H1 (cell line): ENCODE measurements at regions of chr20 and their contacts with region 1.

Region 1: DNA sequence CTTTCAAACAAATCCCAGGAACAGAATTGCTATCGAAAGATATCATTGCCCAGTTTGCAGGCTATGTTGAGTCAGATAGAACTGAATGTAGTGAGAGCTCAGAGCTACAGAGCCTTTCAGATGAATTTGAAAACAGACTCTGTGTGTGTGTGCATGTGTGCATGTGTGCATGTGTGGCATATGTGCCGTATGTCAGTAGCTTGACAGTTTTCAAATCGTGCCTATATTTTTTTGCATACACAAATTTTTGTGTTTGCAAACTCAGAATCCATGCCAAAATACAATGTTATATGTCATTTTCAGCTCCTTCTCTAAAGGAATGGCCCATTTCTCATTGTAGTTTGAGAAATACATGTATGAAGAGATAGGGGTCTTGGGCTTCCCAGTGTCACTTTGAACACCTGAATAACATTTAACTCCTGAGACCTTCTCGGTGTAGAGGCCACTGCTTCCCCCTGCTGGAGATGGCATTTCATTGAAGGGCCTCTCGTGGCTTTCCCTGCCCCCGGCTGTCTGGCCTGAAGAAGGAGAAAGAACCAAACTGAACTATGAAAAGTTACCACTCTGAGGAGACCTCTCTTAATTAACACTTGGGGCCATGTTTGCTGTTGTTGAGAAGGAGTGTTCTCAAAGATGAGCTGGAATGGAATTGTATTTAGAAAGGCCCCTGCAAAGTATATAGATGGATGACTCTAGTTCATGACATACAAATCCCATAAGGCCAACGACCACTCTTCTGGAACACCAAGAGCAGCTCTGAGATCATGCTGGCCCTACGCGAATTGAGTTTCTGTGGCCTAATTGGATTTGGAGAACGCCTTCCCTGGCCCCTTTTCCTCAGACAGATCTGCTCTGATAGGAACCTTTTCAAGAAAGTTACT is 58.7 kb downstream of the VAPB start:
- DNase-seq: peak in 1 of 2 experiments; percentile 76
- H3K4me3 ChIP-seq: no peak overlapping the region
- H3K27ac ChIP-seq: no peak overlapping the region
- H3K4me1 ChIP-seq: peaks cover 4 to 7% (median 5%) of the 10 kb centered on the region in 4 experiments; a peak in 6 of 7 replicates
- H3K27me3 ChIP-seq: no peaks in the 10 kb centered on the region
- CTCF ChIP-seq: peak; percentile 69 to 85 (median 84)
- EP300 ChIP-seq: no peak
- POLR2A ChIP-seq: no peak
- RAD21 ChIP-seq: peak; percentile 88 to 91

Region 2: DNA sequence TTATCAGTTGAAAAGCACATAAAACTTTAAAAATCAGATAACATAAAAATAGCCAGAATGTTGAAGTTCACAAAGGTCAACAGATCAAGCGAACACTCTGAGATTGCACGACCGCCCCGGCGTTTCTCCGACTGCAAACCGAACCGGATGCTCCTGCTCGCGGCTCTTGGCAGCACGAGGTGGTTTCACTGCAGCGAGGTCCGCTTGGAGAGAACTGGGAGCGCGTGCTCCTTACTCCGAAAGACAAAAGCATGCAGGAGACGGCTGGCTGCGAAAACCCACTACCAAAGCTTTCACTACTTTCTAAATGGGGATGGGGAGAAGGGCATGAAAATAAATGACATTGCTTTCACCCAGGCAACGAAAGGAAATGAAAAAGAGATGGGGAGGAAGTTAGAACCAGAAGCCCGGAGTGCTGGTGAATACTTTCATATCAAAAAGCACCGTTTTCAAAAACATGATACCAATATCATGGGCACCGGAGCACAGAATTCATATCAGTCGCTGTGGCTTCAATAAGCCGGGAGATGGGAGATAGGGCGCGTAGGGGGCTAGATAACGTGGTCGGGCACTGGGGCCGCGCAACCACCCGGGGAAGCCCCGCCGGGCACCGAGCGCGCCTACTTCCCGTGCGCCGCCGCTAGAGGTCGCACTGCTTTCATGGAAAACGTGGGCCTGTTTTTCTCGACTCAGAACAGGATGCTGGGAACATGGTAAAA is 211.0 kb before region 1 on chr20:
- CTCF ChIA-PET with region 1: interaction called, 17 read pairs
- POLR2A ChIA-PET with region 1: interaction called, 4 read pairs
- DNase-seq: peak; percentile 34 to 97
- H3K4me3 ChIP-seq: peak overlapping the region; percentile 29 to 60 (median 44); a peak in 7 of 8 replicates
- H3K27ac ChIP-seq: no peak overlapping the region
- H3K4me1 ChIP-seq: no peaks in the 10 kb centered on the region; a peak in 1 of 7 replicates
- H3K27me3 ChIP-seq: no peaks in the 10 kb centered on the region; a peak in 1 of 7 replicates
- CTCF ChIP-seq: peak; percentile 88 to 97 (median 90)
- EP300 ChIP-seq: no peak
- POLR2A ChIP-seq: no peak; a peak in 1 of 3 replicates
- RAD21 ChIP-seq: peak; percentile 88 to 90

Region 3: DNA sequence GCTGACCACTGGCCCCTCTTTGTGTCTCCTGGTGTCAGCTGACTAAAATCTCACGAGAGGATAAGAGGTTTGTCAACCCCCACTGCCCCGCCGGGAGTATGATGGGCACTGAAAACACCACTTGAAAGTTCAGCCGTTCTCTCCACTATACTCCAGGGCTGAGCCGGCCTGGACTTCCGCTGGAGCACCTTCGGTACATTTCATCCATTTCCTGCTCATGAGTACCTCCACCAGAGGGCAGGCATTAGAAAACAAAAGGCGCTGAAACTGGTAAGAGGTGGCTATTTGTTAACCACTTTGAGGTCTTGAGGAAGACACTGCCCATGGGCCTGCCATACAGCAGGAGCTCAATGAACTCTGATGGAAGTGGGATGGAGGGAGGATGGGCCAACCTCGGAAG is 201.4 kb before region 1 on chr20:
- CTCF ChIA-PET with region 1: interaction called, 70 read pairs
- POLR2A ChIA-PET with region 1: interaction called, 3 read pairs
- DNase-seq: no peak
- H3K4me3 ChIP-seq: no peak overlapping the region
- H3K27ac ChIP-seq: no peak overlapping the region
- H3K4me1 ChIP-seq: no peaks in the 10 kb centered on the region; a peak in 2 of 7 replicates
- H3K27me3 ChIP-seq: no peaks in the 10 kb centered on the region
- CTCF ChIP-seq: peak; percentile 13 to 63 (median 57)
- EP300 ChIP-seq: no peak
- POLR2A ChIP-seq: no peak
- RAD21 ChIP-seq: peak; percentile 53 to 66

Region 4: DNA sequence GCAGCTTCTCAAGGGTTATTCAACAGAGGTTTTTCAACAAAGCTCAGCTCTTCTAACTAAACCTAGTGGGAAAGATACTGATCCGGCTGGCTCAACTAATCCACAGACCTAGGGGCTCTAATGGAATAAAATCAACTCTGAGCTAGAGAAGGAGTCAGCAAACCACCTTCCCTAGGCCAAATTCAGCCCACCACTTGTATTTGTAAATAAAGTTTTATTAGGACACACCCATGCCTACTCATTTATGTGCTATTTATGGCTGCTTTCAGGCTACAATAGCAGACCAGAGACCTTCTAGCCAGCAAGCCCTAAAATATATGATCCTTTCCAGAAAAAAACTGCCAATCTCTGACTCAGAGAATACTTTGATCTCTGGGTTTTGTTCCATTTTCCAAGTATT is 144.2 kb before region 1 on chr20:
- CTCF ChIA-PET with region 1: no interaction called
- POLR2A ChIA-PET with region 1: no interaction called
- DNase-seq: no peak
- H3K4me3 ChIP-seq: no peak overlapping the region
- H3K27ac ChIP-seq: no peak overlapping the region
- H3K4me1 ChIP-seq: peaks cover 0 to under 1% (median 0%) of the 10 kb centered on the region in 4 experiments; a peak in 1 of 7 replicates
- H3K27me3 ChIP-seq: no peaks in the 10 kb centered on the region
- CTCF ChIP-seq: no peak
- EP300 ChIP-seq: no peak
- POLR2A ChIP-seq: no peak
- RAD21 ChIP-seq: no peak

Region 5: DNA sequence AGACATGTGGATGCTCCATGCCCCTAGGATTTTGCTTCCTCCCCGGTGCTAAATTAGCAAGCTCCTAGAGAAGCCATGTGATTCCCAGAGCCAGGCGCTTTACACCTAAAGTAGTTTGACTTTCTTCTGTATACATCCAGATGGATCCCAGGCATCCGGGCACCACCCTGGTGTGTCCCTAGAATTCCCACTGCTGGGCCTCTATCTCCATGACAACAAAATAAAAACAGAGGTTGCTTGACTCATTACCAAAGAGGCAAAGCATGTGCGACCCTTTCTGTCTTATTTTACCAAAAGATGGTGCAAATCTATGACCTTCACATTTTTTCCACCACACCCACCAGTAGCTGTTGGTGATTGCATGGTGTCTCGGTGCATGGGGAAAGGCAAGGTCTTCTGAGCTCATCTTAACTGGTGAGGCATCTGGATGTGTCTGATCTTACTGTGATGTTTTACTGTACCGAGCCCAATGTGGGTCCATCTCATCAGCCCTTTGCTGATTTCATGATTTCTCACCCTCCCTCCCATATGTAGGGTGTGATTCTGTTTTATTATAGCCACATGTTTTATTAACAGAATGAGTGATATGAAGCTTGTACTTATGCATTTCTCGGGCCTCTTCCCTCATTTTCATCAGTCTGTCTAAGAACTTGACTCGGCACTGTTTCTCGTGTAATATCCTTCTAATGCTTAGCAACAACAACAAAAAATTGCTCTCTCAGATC is 86.1 kb before region 1 on chr20:
- CTCF ChIA-PET with region 1: interaction called, 20 read pairs
- POLR2A ChIA-PET with region 1: no interaction called
- DNase-seq: no peak
- H3K4me3 ChIP-seq: no peak overlapping the region
- H3K27ac ChIP-seq: no peak overlapping the region
- H3K4me1 ChIP-seq: no peaks in the 10 kb centered on the region
- H3K27me3 ChIP-seq: no peaks in the 10 kb centered on the region
- CTCF ChIP-seq: no peak
- EP300 ChIP-seq: no peak
- POLR2A ChIP-seq: no peak
- RAD21 ChIP-seq: no peak

Region 6: GRCh38 chr20:58433764-58434163 is 14.0 kb before region 1 on chr20:
- CTCF ChIA-PET with region 1: interaction called, 27 read pairs
- POLR2A ChIA-PET with region 1: interaction called, 3 read pairs
- DNase-seq: no peak
- H3K4me3 ChIP-seq: no peak overlapping the region
- H3K27ac ChIP-seq: no peak overlapping the region
- H3K4me1 ChIP-seq: peaks cover 0 to 18% (median 7%) of the 10 kb centered on the region in 4 experiments; a peak in 4 of 7 replicates
- H3K27me3 ChIP-seq: no peaks in the 10 kb centered on the region
- CTCF ChIP-seq: no peak
- EP300 ChIP-seq: no peak
- POLR2A ChIP-seq: no peak
- RAD21 ChIP-seq: no peak

Region 7: DNA sequence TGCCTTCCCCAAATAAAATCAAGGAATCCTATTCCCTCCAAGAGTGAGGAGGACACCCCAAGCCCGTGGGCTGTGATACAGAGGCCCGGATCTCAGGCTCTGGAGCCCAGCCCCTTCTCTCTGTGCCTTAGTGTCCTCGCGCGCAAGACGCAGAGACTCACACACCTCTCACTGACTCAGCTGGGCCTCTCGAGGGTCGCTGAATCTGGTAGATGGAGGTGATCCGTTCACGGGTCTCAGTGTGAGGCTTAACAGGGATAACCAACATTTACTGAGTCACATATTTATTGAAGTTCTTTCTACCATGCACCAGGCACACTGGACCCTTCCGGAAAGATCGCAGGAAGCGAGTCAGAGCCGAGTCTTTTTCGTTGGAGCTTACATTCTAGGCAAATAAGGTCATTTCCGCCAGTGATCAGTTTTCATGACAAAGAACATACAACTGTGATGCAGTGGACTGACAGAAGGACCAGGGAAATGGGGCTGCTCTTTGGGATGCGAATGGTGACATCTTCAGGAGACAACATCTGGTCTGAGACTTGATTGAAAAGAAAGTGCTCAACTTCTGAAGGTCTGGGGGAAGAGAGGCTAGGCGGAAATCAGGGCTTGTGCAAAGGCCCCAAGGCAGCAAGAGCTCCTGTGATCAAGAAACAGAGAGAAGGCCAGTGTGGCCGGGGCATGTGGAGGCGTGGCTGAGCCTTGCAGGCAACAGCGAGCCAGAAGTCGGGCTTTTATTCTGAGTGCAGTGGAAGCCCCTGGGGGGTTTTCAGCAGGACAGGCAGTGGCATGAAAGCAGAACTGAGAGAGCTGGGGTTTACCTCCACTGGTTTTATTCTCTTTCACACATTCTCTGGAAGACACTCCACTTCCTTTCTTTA is 10.7 kb after region 1 on chr20:
- CTCF ChIA-PET with region 1: interaction called, 15 read pairs
- POLR2A ChIA-PET with region 1: interaction called, 7 read pairs
- DNase-seq: no peak
- H3K4me3 ChIP-seq: no peak overlapping the region
- H3K27ac ChIP-seq: no peak overlapping the region
- H3K4me1 ChIP-seq: peaks cover 0 to 4% (median under 1%) of the 10 kb centered on the region in 4 experiments; a peak in 4 of 7 replicates
- H3K27me3 ChIP-seq: no peaks in the 10 kb centered on the region
- CTCF ChIP-seq: no peak
- EP300 ChIP-seq: no peak
- POLR2A ChIP-seq: no peak
- RAD21 ChIP-seq: no peak

Region 8: DNA sequence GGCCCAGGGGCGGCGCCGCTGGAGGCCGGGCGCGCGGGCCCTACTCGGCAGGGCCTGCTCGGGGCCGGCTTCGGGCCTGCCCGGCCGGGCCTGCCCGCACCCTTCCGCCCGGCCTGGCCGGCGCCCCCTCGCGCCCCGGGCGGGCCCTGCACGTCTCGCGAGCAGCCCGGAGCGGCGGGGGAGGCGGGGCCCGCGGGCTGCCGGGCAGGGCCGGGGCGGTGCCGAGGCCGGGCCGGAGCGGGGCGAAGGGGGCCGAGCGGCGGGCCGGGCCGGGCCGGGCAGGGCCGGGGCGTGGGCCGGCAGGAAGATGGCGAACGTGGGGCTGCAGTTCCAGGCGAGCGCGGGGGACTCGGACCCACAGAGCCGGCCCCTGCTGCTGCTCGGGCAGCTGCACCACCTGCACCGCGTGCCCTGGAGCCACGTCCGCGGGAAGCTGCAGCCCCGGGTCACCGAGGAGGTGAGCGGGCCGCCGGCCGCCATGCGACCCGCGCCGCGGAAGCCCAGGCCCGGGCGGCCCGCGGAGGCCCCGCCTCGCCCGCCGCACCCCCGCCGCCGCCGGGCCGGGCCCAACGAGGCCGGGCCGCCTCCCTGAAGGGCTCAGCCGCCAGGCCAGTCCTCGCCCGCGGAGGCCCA is 245.0 kb after region 1 on chr20 and contains the start of gene NPEPL1:
- CTCF ChIA-PET with region 1: no interaction called
- POLR2A ChIA-PET with region 1: no interaction called
- DNase-seq: peak in 1 of 2 experiments; percentile 70
- H3K4me3 ChIP-seq: peak within 1 kb of the TSS; percentile 21 to 56 (median 36)
- H3K27ac ChIP-seq: peak within 1 kb of the TSS; percentile 13; the same call in 1 of the 2 replicates
- H3K4me1 ChIP-seq: peaks cover 3 to 28% (median 17%) of the 10 kb centered on the region in 4 experiments
- H3K27me3 ChIP-seq: no peaks in the 10 kb centered on the region
- CTCF ChIP-seq: peak; percentile 19 to 47 (median 34); a peak in 3 of 4 replicates
- EP300 ChIP-seq: no peak
- POLR2A ChIP-seq: no peak
- RAD21 ChIP-seq: peak in 1 of 2 experiments; percentile 44; a peak in 1 of 4 replicates
- total RNA-seq, gene NPEPL1: 26.7 and 26.8 TPM in 2 replicates